ENCODE measurements at regions of chr1 and their contacts with region 1.

Region 1: DNA sequence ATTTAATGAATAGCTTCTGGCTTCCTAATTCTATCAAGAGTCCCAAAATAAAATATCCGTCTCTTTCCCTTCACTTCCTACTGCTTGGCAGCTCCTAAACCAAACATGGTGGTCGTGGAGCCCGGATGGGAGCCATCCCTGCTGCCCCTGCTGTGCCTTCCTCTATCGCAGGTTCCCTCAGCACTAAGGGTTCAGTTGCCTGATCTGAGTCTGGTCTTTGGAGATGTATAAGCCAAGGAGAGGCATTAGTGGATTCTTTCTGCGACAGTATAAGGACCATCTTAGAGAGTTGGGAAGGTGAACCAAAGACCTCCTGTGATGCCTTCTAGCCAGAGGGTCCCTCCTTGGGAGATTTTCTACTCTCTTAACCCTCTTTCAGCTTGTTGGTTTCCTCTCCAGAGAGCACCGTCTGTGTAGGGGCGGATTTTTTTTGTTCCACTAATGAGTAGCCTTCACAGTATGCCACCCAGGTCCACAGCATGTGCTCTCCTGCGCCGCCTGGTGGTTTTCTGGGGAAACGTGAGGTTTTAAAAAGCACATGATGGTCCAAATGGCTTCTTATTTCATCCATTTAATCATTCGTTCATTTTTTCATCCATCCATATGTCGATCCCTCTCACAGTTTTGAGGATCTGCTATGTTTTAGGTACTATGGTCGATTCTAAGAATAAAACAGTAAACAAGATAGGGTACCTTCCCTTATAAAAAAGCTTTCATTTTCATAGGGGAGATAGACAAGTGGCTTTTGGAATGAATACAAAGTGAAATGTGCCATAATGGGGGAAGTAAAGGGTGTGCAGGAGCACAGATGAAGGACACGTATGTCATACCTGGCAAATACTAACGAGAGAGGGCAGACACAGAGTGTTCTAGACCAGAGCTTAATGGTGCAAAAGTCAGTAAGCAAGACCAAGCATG is 71.0 kb downstream of the NFASC start:
- DNase-seq: peak; percentile 60 to 72
- ATAC-seq: peak; percentile 63 to 84 (median 80)
- H3K4me3 ChIP-seq: no peak overlapping the region
- H3K27ac ChIP-seq: no peak overlapping the region
- H3K4me1 ChIP-seq: peaks cover 0 to 8% (median 0%) of the 10 kb centered on the region in 9 donors
- H3K27me3 ChIP-seq: peaks cover 0 to 3% (median 0%) of the 10 kb centered on the region in 7 donors
- CTCF ChIP-seq: peak; percentile 80 to 95 (median 88)

Region 2: DNA sequence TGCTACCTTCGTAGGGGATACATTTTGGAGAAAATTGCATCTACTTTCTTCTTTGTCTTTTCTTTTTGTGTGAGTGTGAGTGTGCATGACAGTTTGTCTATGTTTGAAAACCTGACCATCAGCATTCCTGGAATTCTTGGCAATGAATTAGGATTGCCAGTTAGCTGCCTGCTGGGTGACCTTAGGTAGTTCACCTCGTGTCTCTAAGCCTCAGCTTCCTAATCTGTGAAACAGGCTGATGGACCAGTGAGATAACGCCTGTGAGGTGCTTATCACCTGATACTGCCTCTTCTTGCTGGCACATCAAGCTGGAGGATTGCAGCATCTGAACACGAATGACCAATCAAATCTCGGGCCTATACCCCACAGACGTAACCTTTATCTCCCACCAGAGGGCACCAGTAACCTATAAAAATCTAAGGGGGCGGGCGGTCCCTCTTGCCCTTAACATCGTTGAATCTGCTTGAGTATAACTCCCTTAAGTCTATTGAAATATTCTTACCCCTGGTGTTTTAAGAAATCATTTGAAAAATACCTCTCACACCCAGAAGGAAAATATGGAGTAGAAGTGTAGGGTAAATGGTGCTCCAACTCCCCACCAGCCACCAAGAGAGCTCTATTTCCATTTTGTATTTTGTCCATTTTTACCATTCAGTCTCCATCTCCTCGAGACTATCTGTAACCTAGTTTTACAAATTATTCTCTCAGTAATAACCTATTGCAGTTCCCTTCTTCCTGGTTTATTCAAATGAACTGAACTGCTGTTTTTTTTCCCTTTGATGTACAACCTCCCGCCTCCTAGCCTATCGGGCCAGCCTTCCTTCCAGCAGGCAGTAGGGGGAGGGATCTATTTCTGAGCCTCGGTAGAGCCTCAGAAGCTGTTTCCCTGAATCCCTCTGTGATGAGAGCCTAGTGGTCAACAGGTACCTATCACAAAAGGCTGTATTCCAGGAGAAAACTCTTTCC is 375.8 kb before region 1 on chr1:
- intact Hi-C with region 1: loop called in 6 of 10 experiments (anchors 10 kb)
- DNase-seq: peak in 1 of 2 donors; percentile 41
- ATAC-seq: peak; percentile 57 to 86 (median 80)
- H3K4me3 ChIP-seq: no peak overlapping the region
- H3K27ac ChIP-seq: no peak overlapping the region
- H3K4me1 ChIP-seq: peaks cover 0 to 3% (median 0%) of the 10 kb centered on the region in 9 donors
- H3K27me3 ChIP-seq: no peaks in the 10 kb centered on the region
- CTCF ChIP-seq: peak in 8 of 9 donors; percentile 43 to 77 (median 68)

Region 3: GRCh38 chr1:204806943-204807687 is 134.6 kb before region 1 on chr1:
- intact Hi-C with region 1: loop called (anchors 1 to 5 kb)
- DNase-seq: peak; percentile 80 to 85
- ATAC-seq: peak; percentile 93 to 98 (median 96)
- H3K4me3 ChIP-seq: peak overlapping the region in 9 of 10 donors; percentile 16 to 59 (median 51)
- H3K27ac ChIP-seq: no peak overlapping the region
- H3K4me1 ChIP-seq: peaks cover 0 to 13% (median 4%) of the 10 kb centered on the region in 9 donors
- H3K27me3 ChIP-seq: no peaks in the 10 kb centered on the region
- CTCF ChIP-seq: peak; percentile 86 to 99 (median 96)

Region 4: DNA sequence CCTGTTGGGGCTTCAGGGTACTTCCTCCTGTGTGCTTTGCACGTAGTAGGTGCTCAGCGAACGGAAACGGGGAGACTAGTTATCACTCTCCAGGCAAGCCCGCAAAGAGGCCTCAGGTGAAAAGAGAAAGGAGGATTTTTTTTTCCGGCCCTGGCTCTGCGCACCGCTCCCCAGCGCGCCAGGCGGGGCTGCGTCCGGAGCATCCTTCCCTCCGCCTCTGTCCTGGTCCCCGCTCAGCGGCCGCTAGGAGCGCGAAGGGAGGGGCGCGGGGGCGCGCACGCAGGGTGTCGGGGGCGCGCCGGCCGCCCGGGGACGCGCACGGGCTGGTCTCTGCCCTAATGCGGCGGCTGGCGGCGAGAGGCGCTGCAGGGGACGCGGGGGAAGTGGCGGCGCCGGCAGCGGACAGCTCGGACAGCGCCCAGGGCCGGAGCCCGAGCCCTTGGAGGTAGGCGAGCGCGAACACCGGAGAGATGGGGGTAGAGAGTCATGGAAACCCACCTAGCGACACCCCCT is 113.3 kb before region 1 on chr1:
- intact Hi-C with region 1: loop called in 1 of 10 experiments (anchors 5 kb)
- DNase-seq: peak; percentile 75 to 79
- ATAC-seq: peak; percentile 93 to 97 (median 96)
- H3K4me3 ChIP-seq: peak overlapping the region in 9 of 10 donors; percentile 44 to 69 (median 55)
- H3K27ac ChIP-seq: peak overlapping the region in 7 of 10 donors; percentile 11 to 69 (median 34)
- H3K4me1 ChIP-seq: peaks cover 0 to 22% (median 5%) of the 10 kb centered on the region in 9 donors
- H3K27me3 ChIP-seq: peaks cover 0 to 30% (median 0%) of the 10 kb centered on the region in 7 donors
- CTCF ChIP-seq: peak in 6 of 9 donors; percentile 8 to 54 (median 42)

Region 5: GRCh38 chr1:204885288-204885711 is 56.4 kb before region 1 on chr1:
- intact Hi-C with region 1: loop called in 1 of 10 experiments (anchors 5 kb)
- DNase-seq: peak in 1 of 2 donors; percentile 25
- ATAC-seq: peak in 5 of 8 donors; percentile 32 to 56 (median 36)
- H3K4me3 ChIP-seq: no peak overlapping the region
- H3K27ac ChIP-seq: peak overlapping the region in 8 of 10 donors; percentile 11 to 61 (median 37)
- H3K4me1 ChIP-seq: peaks cover 5 to 70% (median 26%) of the 10 kb centered on the region in 9 donors
- H3K27me3 ChIP-seq: peaks cover 0 to 13% (median 7%) of the 10 kb centered on the region in 7 donors
- CTCF ChIP-seq: no peak

Measured in heart right ventricle (tissue), 16 donors.